Posterior cingulate gyrus (tissue), 11 donors: ENCODE measurements at regions of chr12 and their contacts with region 1.

Region 1: GRCh38 chr12:46124848-46125619 is 134.7 kb upstream of the SCAF11 start:
- DNase-seq: peak in 7 of 10 donors; percentile 12 to 85 (median 57)

Region 2: DNA sequence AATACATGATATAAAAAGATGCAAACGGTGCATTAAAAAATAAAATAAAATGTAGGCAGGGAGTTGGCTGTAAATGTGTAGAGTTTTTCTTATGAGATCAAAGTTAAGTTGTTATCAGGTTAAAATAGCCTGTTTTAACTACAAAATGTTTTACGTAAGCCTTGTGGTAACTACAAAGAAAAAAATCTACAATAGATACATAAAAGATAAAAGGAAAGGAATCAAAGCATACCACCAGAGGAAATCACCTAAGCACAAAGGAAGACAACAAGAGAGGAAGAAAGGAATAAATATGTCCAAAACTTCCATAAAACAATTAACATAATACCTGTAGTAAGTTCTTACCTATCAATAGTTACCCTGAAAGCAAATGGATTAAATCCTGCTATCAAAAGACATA is 1261.2 kb before region 1 on chr12:
- intact Hi-C with region 1: no loop called
- DNase-seq: no peak

Region 3: GRCh38 chr12:45732250-45732649 is 392.8 kb before region 1 on chr12:
- intact Hi-C with region 1: no loop called
- DNase-seq: no peak

Region 4: GRCh38 chr12:46147144-46147543 is 22.1 kb after region 1 on chr12:
- intact Hi-C with region 1: no loop called
- DNase-seq: no peak

Region 5: DNA sequence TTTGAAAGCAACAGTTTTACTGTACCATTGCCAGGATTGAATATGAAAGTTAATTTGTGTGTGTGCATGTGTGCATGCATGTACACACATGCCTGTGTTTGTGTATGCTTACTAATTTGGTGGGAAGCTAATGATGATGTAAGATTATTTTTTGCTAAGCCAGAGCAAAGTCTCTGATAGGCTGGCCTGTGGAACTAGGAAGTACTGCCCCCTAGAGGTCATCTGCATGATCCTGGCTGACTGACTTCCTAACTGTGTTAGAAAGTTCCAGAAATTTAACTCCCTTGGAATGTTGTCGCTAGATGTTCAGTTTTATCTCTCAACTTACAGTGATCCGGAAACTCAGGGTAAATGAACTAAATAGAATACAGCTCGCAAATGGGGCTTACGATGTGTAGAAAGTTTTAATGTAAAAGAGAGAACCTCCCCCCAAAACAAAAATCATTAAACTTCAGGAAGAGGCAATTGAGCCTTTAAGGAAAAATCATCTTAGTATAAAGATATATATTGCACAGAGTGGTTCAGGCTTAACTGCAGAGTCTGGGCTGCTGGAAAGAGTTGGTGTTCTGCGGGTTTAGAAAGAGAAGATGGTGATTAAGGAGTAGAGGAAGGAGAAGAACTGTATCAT is 178.1 kb after region 1 on chr12:
- intact Hi-C with region 1: loop called (anchors 2 kb)
- DNase-seq: peak in 3 of 10 donors; percentile 8 to 42 (median 19)

Region 6: GRCh38 chr12:46382964-46383653 is 258.1 kb after region 1 on chr12:
- intact Hi-C with region 1: loop called (anchors 5 kb)
- DNase-seq: peak; percentile 93 to 99 (median 96)